Common myeloid progenitor, CD34-positive (primary cell): ENCODE measurements at regions of chr6 and their contacts with region 1.

Region 1: GRCh38 chr6:161370880-161371279 is 97.0 kb upstream of the AGPAT4 start:
- DNase-seq: peak; percentile 78 to 90 (median 89)
- H3K4me3 ChIP-seq: no peak overlapping the region
- H3K27ac ChIP-seq: no peak overlapping the region
- H3K4me1 ChIP-seq: peaks cover 0 to 3% (median 0%) of the 10 kb centered on the region in 4 experiments
- H3K27me3 ChIP-seq: no peaks in the 10 kb centered on the region

Region 2: DNA sequence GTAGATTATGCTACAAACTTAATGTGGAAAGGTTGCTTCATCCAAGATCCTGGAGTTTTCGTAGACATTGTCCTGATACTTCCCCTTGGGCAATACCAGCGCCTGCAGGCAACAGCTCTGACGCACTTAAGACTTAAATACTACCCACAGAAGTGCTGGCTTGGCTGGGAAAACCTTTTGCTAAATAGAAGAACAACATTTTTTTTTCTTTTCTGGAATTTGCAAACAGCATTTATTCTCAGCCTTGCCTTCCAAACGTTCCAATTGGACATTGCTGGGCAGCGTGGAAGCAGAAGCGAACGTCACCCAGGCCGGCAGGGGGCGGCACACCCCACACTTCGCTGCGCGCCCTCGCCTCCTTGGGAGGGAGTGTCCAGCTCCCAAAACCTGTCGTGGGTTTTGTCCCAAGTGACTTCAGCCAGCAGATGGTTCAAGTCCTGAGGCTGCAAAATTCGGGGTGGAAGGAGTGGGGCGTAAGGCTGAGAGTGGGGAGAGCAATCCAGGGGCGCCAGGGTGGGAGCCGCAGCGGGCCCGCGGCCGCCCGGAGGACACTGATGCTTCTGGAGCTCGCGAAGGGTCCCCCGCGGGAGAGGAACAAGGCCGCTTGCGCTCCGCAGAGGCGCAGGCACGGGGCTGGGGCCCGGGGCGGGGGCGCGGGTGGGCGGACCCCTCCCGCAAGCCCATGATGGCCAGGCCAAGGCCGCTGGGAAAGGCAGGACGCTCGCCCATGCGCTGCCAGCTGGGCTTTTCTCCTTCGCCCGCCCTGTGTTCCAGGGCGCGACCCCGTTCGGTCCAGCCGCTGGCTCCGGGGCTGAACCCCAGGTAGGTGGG is 440.1 kb before region 1 on chr6:
- CTCF ChIA-PET with region 1: interaction called, 139 read pairs
- POLR2A ChIA-PET with region 1: no interaction called
- DNase-seq: peak; percentile 46 to 64 (median 63)
- H3K4me3 ChIP-seq: peak overlapping the region in 6 of 7 experiments; percentile 32 to 76 (median 58)
- H3K27ac ChIP-seq: no peak overlapping the region
- H3K4me1 ChIP-seq: peaks cover 0 to 7% (median 4%) of the 10 kb centered on the region in 4 experiments
- H3K27me3 ChIP-seq: peaks cover 2 to 52% (median 15%) of the 10 kb centered on the region in 5 experiments

Region 3: GRCh38 chr6:161101517-161101916 is 269.4 kb before region 1 on chr6:
- CTCF ChIA-PET with region 1: interaction called, 69 read pairs
- POLR2A ChIA-PET with region 1: no interaction called
- DNase-seq: peak; percentile 11 to 48 (median 41)
- H3K4me3 ChIP-seq: no peak overlapping the region
- H3K27ac ChIP-seq: no peak overlapping the region
- H3K4me1 ChIP-seq: no peaks in the 10 kb centered on the region
- H3K27me3 ChIP-seq: no peaks in the 10 kb centered on the region

Region 4: GRCh38 chr6:161152907-161153662 is 217.8 kb before region 1 on chr6:
- CTCF ChIA-PET with region 1: interaction called, 185 read pairs
- POLR2A ChIA-PET with region 1: no interaction called
- DNase-seq: peak; percentile 25 to 46 (median 31)
- H3K4me3 ChIP-seq: no peak overlapping the region
- H3K27ac ChIP-seq: no peak overlapping the region
- H3K4me1 ChIP-seq: no peaks in the 10 kb centered on the region
- H3K27me3 ChIP-seq: no peaks in the 10 kb centered on the region

Region 5: GRCh38 chr6:161163466-161164181 is 207.3 kb before region 1 on chr6:
- CTCF ChIA-PET with region 1: interaction called, 10 read pairs
- POLR2A ChIA-PET with region 1: no interaction called
- DNase-seq: no peak
- H3K4me3 ChIP-seq: no peak overlapping the region
- H3K27ac ChIP-seq: no peak overlapping the region
- H3K4me1 ChIP-seq: no peaks in the 10 kb centered on the region
- H3K27me3 ChIP-seq: no peaks in the 10 kb centered on the region

Region 6: GRCh38 chr6:161292145-161292544 is 78.7 kb before region 1 on chr6:
- CTCF ChIA-PET with region 1: no interaction called
- POLR2A ChIA-PET with region 1: no interaction called
- DNase-seq: no peak
- H3K4me3 ChIP-seq: no peak overlapping the region
- H3K27ac ChIP-seq: no peak overlapping the region
- H3K4me1 ChIP-seq: no peaks in the 10 kb centered on the region
- H3K27me3 ChIP-seq: no peaks in the 10 kb centered on the region

Region 7: GRCh38 chr6:161353208-161353613 is 17.7 kb before region 1 on chr6:
- CTCF ChIA-PET with region 1: interaction called, 17 read pairs
- POLR2A ChIA-PET with region 1: no interaction called
- DNase-seq: no peak
- H3K4me3 ChIP-seq: no peak overlapping the region
- H3K27ac ChIP-seq: no peak overlapping the region
- H3K4me1 ChIP-seq: peaks cover 0 to 6% (median 2%) of the 10 kb centered on the region in 4 experiments
- H3K27me3 ChIP-seq: no peaks in the 10 kb centered on the region

Region 8: DNA sequence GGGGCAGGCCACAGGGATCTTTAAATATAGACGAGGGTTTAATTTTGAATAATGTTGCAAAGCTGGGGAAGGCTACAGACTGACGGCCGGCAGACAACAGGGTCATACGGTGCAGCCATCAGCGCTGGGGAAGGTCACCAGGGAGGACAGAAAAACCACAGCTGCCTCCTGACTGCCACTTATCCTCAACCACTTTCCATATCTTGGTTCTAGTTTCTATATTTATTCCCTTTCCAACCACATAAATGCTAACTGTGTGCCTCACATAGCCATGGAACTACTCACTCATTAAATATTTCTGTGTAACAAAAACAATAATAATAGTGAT is 11.3 kb before region 1 on chr6:
- CTCF ChIA-PET with region 1: interaction called, 19 read pairs
- POLR2A ChIA-PET with region 1: no interaction called
- DNase-seq: no peak
- H3K4me3 ChIP-seq: no peak overlapping the region
- H3K27ac ChIP-seq: no peak overlapping the region
- H3K4me1 ChIP-seq: peaks cover 0 to 13% (median 8%) of the 10 kb centered on the region in 4 experiments
- H3K27me3 ChIP-seq: no peaks in the 10 kb centered on the region

Region 9: GRCh38 chr6:161411265-161411944 is 40.5 kb after region 1 on chr6:
- CTCF ChIA-PET with region 1: no interaction called
- POLR2A ChIA-PET with region 1: no interaction called
- DNase-seq: no peak
- H3K4me3 ChIP-seq: no peak overlapping the region
- H3K27ac ChIP-seq: no peak overlapping the region
- H3K4me1 ChIP-seq: no peaks in the 10 kb centered on the region
- H3K27me3 ChIP-seq: peaks cover 0 to 5% (median 0%) of the 10 kb centered on the region in 5 experiments

Region 10: GRCh38 chr6:161711515-161711914 is 340.6 kb after region 1 on chr6:
- CTCF ChIA-PET with region 1: no interaction called
- POLR2A ChIA-PET with region 1: no interaction called
- DNase-seq: no peak
- H3K4me3 ChIP-seq: no peak overlapping the region
- H3K27ac ChIP-seq: no peak overlapping the region
- H3K4me1 ChIP-seq: no peaks in the 10 kb centered on the region
- H3K27me3 ChIP-seq: no peaks in the 10 kb centered on the region